Ovary (tissue), 10 donors: ENCODE measurements at regions of chr15 and their contacts with region 1.

Region 1: DNA sequence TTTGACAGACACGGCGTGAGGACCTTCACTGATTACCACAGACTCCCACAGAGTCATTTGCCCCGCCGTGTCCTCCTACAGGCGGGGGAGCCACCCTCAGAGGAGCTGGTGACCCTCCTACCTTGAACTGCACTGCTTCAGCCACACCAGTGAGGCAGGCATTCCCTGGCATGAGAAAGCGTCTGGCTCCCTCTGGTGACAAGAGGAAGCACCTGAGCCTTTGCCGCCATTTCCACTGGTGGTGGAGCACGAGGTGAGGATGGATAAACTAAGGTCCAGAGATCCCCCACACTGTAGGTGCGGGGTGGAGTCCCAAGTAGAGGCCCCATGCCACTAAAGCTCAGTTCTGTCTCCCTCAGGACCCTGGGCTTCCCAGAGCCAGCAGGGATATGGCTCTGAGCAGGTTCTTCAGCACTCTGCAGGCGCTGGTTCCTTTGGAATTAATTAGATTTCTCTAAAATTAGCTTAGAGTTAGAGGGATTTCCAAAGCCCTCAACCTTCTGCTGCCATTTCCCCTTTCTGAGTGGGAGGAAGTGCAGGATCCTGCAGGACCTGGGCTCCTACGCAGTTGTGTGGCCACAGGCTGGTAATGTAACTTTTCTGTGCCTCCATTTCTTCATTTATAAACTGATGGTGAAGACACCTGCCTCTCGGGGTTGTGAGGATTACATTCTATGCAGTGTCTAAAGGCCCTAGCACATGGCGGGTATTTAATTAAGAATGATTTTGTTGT is 224.0 kb downstream of the SLCO3A1 start:
- DNase-seq: peak; percentile 31 to 62 (median 61)
- H3K4me3 ChIP-seq: no peak overlapping the region
- H3K27ac ChIP-seq: no peak overlapping the region
- H3K4me1 ChIP-seq: no peaks in the 10 kb centered on the region
- H3K27me3 ChIP-seq: no peaks in the 10 kb centered on the region
- CTCF ChIP-seq: peak in 2 of 3 donors; percentile 21 to 43
- EP300 ChIP-seq: no peak
- POLR2A ChIP-seq: no peak

Region 2: GRCh38 chr15:91302588-91303439 is 774.7 kb before region 1 on chr15:
- intact Hi-C with region 1: loop called (anchors 5 to 10 kb)
- DNase-seq: peak in 2 of 5 donors; percentile 17 to 23
- H3K4me3 ChIP-seq: no peak overlapping the region
- H3K27ac ChIP-seq: no peak overlapping the region
- H3K4me1 ChIP-seq: no peaks in the 10 kb centered on the region
- H3K27me3 ChIP-seq: no peaks in the 10 kb centered on the region
- CTCF ChIP-seq: peak in 1 of 3 donors; percentile 37
- EP300 ChIP-seq: no peak
- POLR2A ChIP-seq: no peak

Region 3: DNA sequence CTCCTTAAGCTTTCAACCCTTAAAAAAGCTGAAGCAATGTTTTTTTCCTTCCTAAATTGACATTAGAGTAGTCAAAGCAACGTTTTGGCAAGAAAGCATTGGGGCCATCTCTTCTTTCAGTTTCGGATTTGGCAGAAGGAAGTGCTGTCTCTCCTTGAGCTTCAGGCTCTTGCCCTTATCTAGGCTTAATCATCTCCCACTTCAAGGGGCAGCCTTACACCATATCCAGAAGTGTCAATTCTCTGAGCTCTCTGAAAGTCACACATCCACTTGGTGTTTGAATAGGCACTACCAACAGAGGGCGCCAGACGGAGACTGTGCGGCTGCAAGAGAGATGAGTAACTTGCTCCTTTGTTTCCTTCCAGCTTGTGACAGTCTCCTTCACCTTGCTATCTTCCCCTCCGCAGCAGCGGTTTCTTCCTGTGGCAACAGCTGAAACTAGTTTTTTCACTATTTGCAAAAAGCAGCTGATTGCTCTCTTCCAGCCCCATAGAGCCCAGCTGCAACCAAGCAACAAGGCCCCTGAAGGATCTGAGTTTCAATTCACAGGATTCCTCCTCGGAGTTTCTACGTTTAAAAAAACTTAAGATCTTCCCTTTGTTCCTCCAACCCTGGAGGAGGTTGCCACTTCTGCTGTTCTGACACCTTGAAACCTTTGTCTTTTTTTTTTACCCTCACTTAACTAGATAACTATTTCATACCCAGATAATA is 371.0 kb before region 1 on chr15:
- intact Hi-C with region 1: loop called in 1 of 4 experiments (anchors 10 kb)
- DNase-seq: peak; percentile 47 to 76 (median 70)
- H3K4me3 ChIP-seq: no peak overlapping the region
- H3K27ac ChIP-seq: no peak overlapping the region
- H3K4me1 ChIP-seq: no peaks in the 10 kb centered on the region
- H3K27me3 ChIP-seq: no peaks in the 10 kb centered on the region
- CTCF ChIP-seq: peak; percentile 22 to 42 (median 31)
- EP300 ChIP-seq: no peak
- POLR2A ChIP-seq: no peak